ENCODE measurements at regions of chr9 and their contacts with region 1.

Region 1: GRCh38 chr9:20622330-20623020 is at the start of gene MLLT3:
- DNase-seq: peak; percentile 95 to 98
- ATAC-seq: peak; percentile 80 to 91 (median 85)
- H3K4me3 ChIP-seq: peak within 1 kb of the TSS; percentile 92
- H3K4me3 Mint-ChIP-seq: peak within 1 kb of the TSS; percentile 95
- H3K27ac ChIP-seq: peak within 1 kb of the TSS; percentile 73
- H3K27ac Mint-ChIP-seq: peak within 1 kb of the TSS; percentile 83 to 84
- H3K4me1 ChIP-seq: peaks cover 22% of the 10 kb centered on the region
- H3K4me1 Mint-ChIP-seq: peaks cover 40 to 41% of the 10 kb centered on the region in 2 donors
- H3K27me3 ChIP-seq: no peaks in the 10 kb centered on the region
- H3K27me3 Mint-ChIP-seq: no peaks in the 10 kb centered on the region
- CTCF ChIP-seq: no peak
- total RNA-seq, gene MLLT3: 24.3 to 26.6 (median 25.2) TPM

Region 2: GRCh38 chr9:20684035-20684872 is 61.8 kb after region 1 on chr9 and contains the start of gene FOCAD:
- intact Hi-C with region 1: loop called (anchors 1 kb)
- DNase-seq: peak; percentile 96 to 97
- ATAC-seq: peak; percentile 98 to 99 (median 98)
- H3K4me3 ChIP-seq: peak within 1 kb of the TSS; percentile 83
- H3K4me3 Mint-ChIP-seq: peak within 1 kb of the TSS; percentile 88
- H3K27ac ChIP-seq: peak within 1 kb of the TSS; percentile 56
- H3K27ac Mint-ChIP-seq: peak within 1 kb of the TSS; percentile 64 to 79
- H3K4me1 ChIP-seq: peaks cover 6% of the 10 kb centered on the region
- H3K4me1 Mint-ChIP-seq: peaks cover 15 to 17% of the 10 kb centered on the region in 2 donors
- H3K27me3 ChIP-seq: no peaks in the 10 kb centered on the region
- H3K27me3 Mint-ChIP-seq: no peaks in the 10 kb centered on the region
- CTCF ChIP-seq: no peak
- total RNA-seq, gene FOCAD: 15.1 to 27.6 (median 18.8) TPM

Region 3: DNA sequence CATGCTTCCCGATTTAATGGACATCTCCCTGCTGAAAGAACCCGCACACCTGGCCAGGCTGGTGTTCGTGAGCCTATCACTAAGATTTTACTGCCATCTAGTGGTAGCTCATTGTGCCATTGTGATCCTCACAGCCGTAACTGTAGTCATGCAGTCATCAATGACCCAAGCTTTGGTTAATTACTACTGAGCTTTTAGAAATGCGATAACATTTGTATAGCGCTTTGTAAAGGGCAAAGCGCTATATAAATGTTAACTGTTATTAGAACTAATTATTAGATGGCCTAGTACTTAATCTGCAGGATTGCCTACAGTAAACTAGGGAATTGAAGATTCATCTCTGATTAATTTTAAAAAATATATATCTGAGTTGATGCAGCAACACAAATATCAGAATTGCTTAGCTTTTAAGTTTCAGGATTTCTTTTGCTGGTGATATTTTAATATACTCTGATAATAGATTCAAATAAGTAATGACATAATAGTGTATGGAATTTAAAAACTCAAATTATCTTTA is 318.8 kb after region 1 on chr9:
- intact Hi-C with region 1: loop called (anchors 1 kb)
- DNase-seq: peak; percentile 17 to 85
- ATAC-seq: peak; percentile 84 to 94 (median 90)
- H3K4me3 ChIP-seq: no peak overlapping the region
- H3K4me3 Mint-ChIP-seq: no peak overlapping the region
- H3K27ac ChIP-seq: no peak overlapping the region
- H3K27ac Mint-ChIP-seq: no peak overlapping the region
- H3K4me1 ChIP-seq: no peaks in the 10 kb centered on the region
- H3K4me1 Mint-ChIP-seq: no peaks in the 10 kb centered on the region
- H3K27me3 ChIP-seq: no peaks in the 10 kb centered on the region
- H3K27me3 Mint-ChIP-seq: no peaks in the 10 kb centered on the region
- CTCF ChIP-seq: peak; percentile 88

Region 4: GRCh38 chr9:21031091-21031807 is 408.8 kb after region 1 on chr9 and contains the start of gene HACD4:
- intact Hi-C with region 1: loop called (anchors 5 kb)
- DNase-seq: peak; percentile 58 to 80
- ATAC-seq: peak; percentile 75 to 87 (median 83)
- H3K4me3 ChIP-seq: peak within 1 kb of the TSS; percentile 52
- H3K4me3 Mint-ChIP-seq: peak within 1 kb of the TSS; percentile 69
- H3K27ac ChIP-seq: peak within 1 kb of the TSS; percentile 78
- H3K27ac Mint-ChIP-seq: peak within 1 kb of the TSS in 1 of 2 donors; percentile 68
- H3K4me1 ChIP-seq: peaks cover 14% of the 10 kb centered on the region
- H3K4me1 Mint-ChIP-seq: peaks cover 24 to 32% of the 10 kb centered on the region in 2 donors
- H3K27me3 ChIP-seq: no peaks in the 10 kb centered on the region
- H3K27me3 Mint-ChIP-seq: no peaks in the 10 kb centered on the region
- CTCF ChIP-seq: no peak
- total RNA-seq, gene HACD4: 14.0 to 16.5 (median 14.4) TPM

Region 5: GRCh38 chr9:21110708-21111576 is 488.5 kb after region 1 on chr9:
- intact Hi-C with region 1: loop called (anchors 1 kb)
- DNase-seq: peak in 1 of 2 donors; percentile 87
- ATAC-seq: peak; percentile 92 to 97 (median 96)
- H3K4me3 ChIP-seq: no peak overlapping the region
- H3K4me3 Mint-ChIP-seq: no peak overlapping the region
- H3K27ac ChIP-seq: no peak overlapping the region
- H3K27ac Mint-ChIP-seq: no peak overlapping the region
- H3K4me1 ChIP-seq: no peaks in the 10 kb centered on the region
- H3K4me1 Mint-ChIP-seq: no peaks in the 10 kb centered on the region
- H3K27me3 ChIP-seq: no peaks in the 10 kb centered on the region
- H3K27me3 Mint-ChIP-seq: peaks cover 0 to 3% of the 10 kb centered on the region in 2 donors
- CTCF ChIP-seq: peak; percentile 98